MCF 10A (cell line): ENCODE measurements at regions of chr1 and their contacts with region 1.

Region 1: DNA sequence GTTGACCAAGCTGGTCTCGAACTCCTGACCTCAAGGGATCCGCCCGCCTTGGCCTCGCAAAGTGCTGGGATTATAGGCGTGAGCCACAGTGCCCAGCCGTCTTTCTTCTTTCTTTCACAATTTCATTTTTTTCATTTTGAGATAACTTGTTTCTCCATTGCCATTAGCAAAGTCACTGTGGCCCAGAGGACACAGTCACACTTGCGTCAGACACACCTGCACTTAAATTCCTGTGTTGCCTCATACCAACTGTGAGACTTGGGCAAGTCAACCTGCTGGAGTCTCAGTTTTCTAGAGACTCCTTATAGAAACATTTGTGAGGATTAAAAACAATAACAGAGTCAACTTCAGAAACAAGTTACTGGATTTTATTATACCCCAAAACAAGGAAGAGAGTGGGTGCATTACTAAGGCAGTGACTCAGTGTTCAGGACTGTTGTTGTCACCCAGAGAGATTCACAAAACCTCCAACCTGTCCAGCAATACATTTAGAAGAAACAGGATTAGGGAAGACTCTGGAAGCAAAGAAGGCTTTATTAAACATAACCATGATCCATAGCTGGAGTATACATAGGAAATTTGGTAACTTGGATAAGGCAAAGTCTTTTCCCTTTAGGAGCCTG is 2.6 kb downstream of the TEDDM1 start:
- DNase-seq: peak; percentile 81
- H3K4me3 Mint-ChIP-seq: peak overlapping the region; percentile 0
- H3K27ac Mint-ChIP-seq: peak overlapping the region; percentile 76
- H3K4me1 Mint-ChIP-seq: peaks cover 22% of the 10 kb centered on the region
- H3K27me3 Mint-ChIP-seq: no peaks in the 10 kb centered on the region
- CTCF ChIP-seq: no peak

Region 2: GRCh38 chr1:181479137-181479745 is 918.6 kb before region 1 on chr1:
- CTCF ChIA-PET with region 1: interaction called, 17 read pairs
- POLR2A ChIA-PET with region 1: no interaction called
- intact Hi-C with region 1: loop called (anchors 5 kb)
- DNase-seq: peak; percentile 80
- H3K4me3 Mint-ChIP-seq: no peak overlapping the region
- H3K27ac Mint-ChIP-seq: no peak overlapping the region
- H3K4me1 Mint-ChIP-seq: no peaks in the 10 kb centered on the region
- H3K27me3 Mint-ChIP-seq: peaks cover 28% of the 10 kb centered on the region
- CTCF ChIP-seq: peak; percentile 97

Region 3: DNA sequence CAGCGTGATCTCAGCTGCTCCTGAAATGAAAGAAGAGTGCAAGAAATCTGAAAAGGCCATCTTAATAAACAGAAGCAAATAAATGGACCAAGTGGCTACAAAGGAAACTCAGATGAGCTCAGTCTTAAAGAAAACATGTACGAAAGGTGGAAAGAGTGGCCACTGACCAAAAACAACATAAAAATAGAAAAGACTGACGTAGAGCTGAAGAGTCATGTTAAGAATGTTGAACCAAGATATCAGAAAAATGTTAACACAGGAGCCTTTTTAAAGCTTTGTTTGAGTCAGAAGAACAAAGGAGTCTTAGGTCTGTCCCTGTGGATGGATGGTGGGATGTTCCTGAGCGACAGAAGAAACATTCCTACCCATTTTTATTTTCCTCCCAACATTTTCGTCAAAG is 305.5 kb before region 1 on chr1:
- CTCF ChIA-PET with region 1: interaction called, 450 read pairs
- POLR2A ChIA-PET with region 1: interaction called, 112 read pairs
- intact Hi-C with region 1: no loop called
- DNase-seq: no peak
- H3K4me3 Mint-ChIP-seq: no peak overlapping the region
- H3K27ac Mint-ChIP-seq: no peak overlapping the region
- H3K4me1 Mint-ChIP-seq: peaks cover 15% of the 10 kb centered on the region
- H3K27me3 Mint-ChIP-seq: no peaks in the 10 kb centered on the region
- CTCF ChIP-seq: no peak

Region 4: GRCh38 chr1:182175361-182175931 is 222.4 kb before region 1 on chr1:
- CTCF ChIA-PET with region 1: interaction called, 6 read pairs
- POLR2A ChIA-PET with region 1: interaction called, 13 read pairs
- intact Hi-C with region 1: no loop called
- DNase-seq: peak; percentile 84
- H3K4me3 Mint-ChIP-seq: no peak overlapping the region
- H3K27ac Mint-ChIP-seq: peak overlapping the region; percentile 74
- H3K4me1 Mint-ChIP-seq: peaks cover 40% of the 10 kb centered on the region
- H3K27me3 Mint-ChIP-seq: no peaks in the 10 kb centered on the region
- CTCF ChIP-seq: no peak

Region 5: GRCh38 chr1:182215764-182216163 is 182.1 kb before region 1 on chr1:
- CTCF ChIA-PET with region 1: no interaction called
- POLR2A ChIA-PET with region 1: interaction called, 15 read pairs
- intact Hi-C with region 1: loop called (anchors 5 kb)
- DNase-seq: peak; percentile 28
- H3K4me3 Mint-ChIP-seq: no peak overlapping the region
- H3K27ac Mint-ChIP-seq: peak overlapping the region; percentile 7
- H3K4me1 Mint-ChIP-seq: peaks cover 32% of the 10 kb centered on the region
- H3K27me3 Mint-ChIP-seq: no peaks in the 10 kb centered on the region
- CTCF ChIP-seq: no peak

Region 6: GRCh38 chr1:182381962-182382819 is 15.7 kb before region 1 on chr1:
- CTCF ChIA-PET with region 1: interaction called, 21 read pairs
- POLR2A ChIA-PET with region 1: interaction called, 151 read pairs
- intact Hi-C with region 1: no loop called
- DNase-seq: no peak
- H3K4me3 Mint-ChIP-seq: no peak overlapping the region
- H3K27ac Mint-ChIP-seq: peak overlapping the region; percentile 78
- H3K4me1 Mint-ChIP-seq: peaks cover 39% of the 10 kb centered on the region
- H3K27me3 Mint-ChIP-seq: no peaks in the 10 kb centered on the region
- CTCF ChIP-seq: no peak

Region 7: GRCh38 chr1:182460550-182460951 is 62.7 kb after region 1 on chr1:
- CTCF ChIA-PET with region 1: no interaction called
- POLR2A ChIA-PET with region 1: no interaction called
- intact Hi-C with region 1: no loop called
- DNase-seq: peak; percentile 57
- H3K4me3 Mint-ChIP-seq: no peak overlapping the region
- H3K27ac Mint-ChIP-seq: peak overlapping the region; percentile 72
- H3K4me1 Mint-ChIP-seq: peaks cover 7% of the 10 kb centered on the region
- H3K27me3 Mint-ChIP-seq: peaks cover 7% of the 10 kb centered on the region
- CTCF ChIP-seq: no peak

Region 8: DNA sequence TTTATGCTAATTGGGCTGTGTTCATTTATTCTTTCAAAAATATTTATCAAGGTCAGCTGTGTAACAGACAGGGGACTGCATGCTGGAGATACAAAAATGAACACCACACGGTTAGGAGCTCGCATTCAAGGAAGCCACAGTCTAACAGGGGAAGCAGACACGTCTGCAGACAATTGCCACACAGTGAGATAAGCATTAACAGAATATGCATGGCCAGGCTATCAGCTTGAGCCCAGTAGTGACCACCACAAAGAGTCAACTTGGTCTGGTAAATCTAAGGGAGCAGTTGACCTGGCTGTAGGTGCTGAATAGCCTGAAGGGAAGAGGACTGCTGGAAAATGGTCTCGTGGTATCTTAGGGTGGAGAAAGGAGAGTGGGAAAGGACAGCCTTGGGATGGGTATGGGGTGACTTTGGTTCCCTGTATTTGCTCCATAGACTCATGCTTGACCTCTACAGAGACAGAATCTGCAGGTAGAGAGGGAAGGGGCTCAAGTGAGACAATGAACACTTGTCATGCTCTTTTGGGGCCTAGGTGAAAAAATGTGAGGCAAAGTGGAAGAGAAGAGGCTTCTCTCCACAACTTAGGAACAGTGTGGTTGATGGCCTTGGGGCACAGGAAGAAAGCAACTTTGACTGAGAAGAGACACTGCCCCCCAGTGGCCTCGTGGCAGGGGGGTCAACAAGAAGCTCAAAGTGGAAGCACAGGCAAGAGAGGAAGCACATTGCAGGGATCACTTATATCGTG is 384.1 kb after region 1 on chr1:
- CTCF ChIA-PET with region 1: interaction called, 11 read pairs
- POLR2A ChIA-PET with region 1: no interaction called
- intact Hi-C with region 1: loop called (anchors 2 kb)
- DNase-seq: peak; percentile 82
- H3K4me3 Mint-ChIP-seq: no peak overlapping the region
- H3K27ac Mint-ChIP-seq: no peak overlapping the region
- H3K4me1 Mint-ChIP-seq: peaks cover 19% of the 10 kb centered on the region
- H3K27me3 Mint-ChIP-seq: no peaks in the 10 kb centered on the region
- CTCF ChIP-seq: peak; percentile 76